Naive thymus-derived CD4-positive, alpha-beta T cell (primary cell): ENCODE measurements at regions of chr10 and their contacts with region 1.

Region 1: GRCh38 chr10:15106352-15107013 is 9.3 kb downstream of the RPP38 start:
- DNase-seq: peak; percentile 41 to 67 (median 58)
- ATAC-seq: peak; percentile 99
- H3K4me3 ChIP-seq: no peak overlapping the region
- H3K4me3 Mint-ChIP-seq: no peak overlapping the region
- H3K27ac ChIP-seq: peak overlapping the region; percentile 9
- H3K27ac Mint-ChIP-seq: peak overlapping the region; percentile 26 to 88 (median 68)
- H3K4me1 ChIP-seq: no peaks in the 10 kb centered on the region
- H3K4me1 Mint-ChIP-seq: peaks cover 3 to 9% (median 5%) of the 10 kb centered on the region in 7 donors
- H3K27me3 ChIP-seq: no peaks in the 10 kb centered on the region
- H3K27me3 Mint-ChIP-seq: no peaks in the 10 kb centered on the region

Region 2: DNA sequence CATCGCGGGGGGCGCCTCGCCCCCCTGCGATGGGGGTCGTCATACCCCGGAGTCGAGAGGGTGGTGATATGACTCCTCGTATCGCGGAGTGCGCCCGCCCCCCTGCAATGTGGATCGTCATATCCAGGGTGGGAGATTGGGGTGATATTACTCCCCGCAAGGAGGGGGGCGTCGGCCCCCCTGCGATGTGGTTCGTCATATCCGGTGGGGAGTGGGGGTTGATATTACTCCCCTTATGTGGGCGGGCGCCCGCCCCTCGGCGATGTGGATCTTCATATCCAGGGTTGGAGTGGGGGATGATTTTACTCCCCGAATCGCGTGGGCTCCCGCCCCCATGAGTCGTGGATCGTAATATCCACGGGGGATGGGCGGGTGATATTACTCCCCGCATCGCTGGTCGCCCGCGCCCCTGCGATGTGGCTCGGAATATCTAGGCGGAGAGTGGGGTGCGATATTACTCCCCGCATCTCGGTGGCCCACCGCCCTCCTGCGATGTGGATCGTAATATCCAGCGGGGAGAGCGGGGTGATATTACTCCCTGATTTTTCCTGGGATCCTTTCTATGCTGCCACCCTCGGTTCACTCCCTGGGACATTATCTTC is 110.4 kb before region 1 on chr10:
- CTCF ChIA-PET with region 1: no interaction called
- POLR2A ChIA-PET with region 1: no interaction called
- intact Hi-C with region 1: loop called (anchors 1 kb)
- DNase-seq: no peak
- ATAC-seq: no peak
- H3K4me3 ChIP-seq: no peak overlapping the region
- H3K4me3 Mint-ChIP-seq: peak overlapping the region in 1 of 10 donors; percentile 50
- H3K27ac ChIP-seq: no peak overlapping the region
- H3K27ac Mint-ChIP-seq: no peak overlapping the region
- H3K4me1 ChIP-seq: no peaks in the 10 kb centered on the region
- H3K4me1 Mint-ChIP-seq: peaks cover 0 to 8% (median 0%) of the 10 kb centered on the region in 7 donors
- H3K27me3 ChIP-seq: no peaks in the 10 kb centered on the region
- H3K27me3 Mint-ChIP-seq: peaks cover 0 to 5% (median 0%) of the 10 kb centered on the region in 5 donors